Vagina (tissue), 2 donors: ENCODE measurements at regions of chr5 and their contacts with region 1.

Region 1: DNA sequence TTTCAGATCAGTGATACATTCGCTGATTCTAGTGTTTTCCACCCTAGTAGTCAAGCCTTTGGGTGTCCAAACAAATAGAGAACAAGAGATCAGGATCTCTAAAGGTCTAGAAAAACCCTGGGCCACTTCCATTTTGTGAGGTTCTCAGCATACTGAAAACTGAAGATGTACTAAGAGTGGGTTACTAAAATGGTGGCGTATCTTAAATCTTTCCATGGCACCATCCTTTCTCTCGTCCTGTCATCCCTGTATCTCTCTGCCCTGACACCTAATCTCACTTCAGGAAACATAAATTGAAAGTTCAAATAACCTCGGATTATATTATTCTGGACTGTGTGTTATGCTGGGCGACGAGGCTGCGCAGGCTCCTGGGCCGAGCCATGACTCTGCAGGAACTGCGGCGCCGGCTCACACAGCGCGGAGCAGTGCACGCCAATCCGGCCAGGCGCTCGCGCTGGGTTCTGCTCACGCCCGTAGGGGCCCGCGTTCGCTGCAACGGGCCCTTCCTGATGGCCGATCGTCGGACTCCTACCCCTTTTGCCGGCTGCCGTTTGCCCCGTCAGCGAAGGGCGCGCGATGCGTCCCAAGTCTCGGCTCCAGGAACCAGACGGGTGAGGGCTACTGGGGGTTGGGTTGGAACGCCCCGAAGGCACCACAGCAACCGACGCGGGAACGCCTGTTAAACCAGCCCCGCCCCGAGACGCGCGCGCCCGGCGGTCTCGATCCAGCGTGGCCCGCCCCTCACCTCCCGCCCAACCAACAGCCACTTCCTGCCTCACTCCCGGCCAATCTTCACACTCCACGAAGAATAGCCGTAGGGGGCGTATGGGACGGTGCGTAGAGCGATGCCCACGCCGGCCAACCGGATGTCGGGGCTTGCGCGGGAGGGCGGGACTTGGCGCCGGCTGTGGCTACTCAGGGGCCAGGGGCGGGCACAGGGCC is 503 bp upstream of the CANX start:
- DNase-seq: peak; percentile 99
- H3K4me3 ChIP-seq: peak overlapping the region; percentile 91 to 95
- H3K27ac ChIP-seq: peak overlapping the region; percentile 96
- H3K4me1 ChIP-seq: peaks cover 45% of the 10 kb centered on the region
- H3K27me3 ChIP-seq: no peaks in the 10 kb centered on the region
- CTCF ChIP-seq: no peak
- POLR2A ChIP-seq: peak in 1 of 2 donors; percentile 74

Region 2: DNA sequence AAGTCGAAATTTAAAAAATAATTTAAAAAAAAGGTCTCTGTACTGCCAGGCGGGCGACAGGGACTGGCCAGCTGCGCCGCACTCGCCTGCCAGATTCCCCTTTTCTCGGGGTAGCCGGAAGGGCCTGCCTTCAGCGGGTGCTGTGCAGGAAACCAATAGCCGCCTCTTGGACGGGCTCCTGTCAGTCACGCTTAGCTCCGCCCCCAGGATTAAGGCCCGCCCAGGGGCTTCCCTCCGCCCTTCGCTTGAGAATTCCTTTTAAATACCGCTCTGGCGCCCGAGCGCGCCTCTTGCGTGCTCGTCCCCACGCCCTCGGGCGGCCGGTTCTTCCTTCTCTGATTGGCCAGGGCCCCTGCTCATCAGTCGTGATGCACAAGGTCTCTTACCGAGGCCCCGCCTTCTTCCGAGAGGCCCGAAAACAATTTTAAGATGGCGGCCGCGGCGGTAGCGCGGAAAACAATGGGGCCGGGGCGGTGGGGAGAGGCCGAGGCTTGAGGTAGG is 34.2 kb after region 1 on chr5 and contains the start of gene MAML1:
- intact Hi-C with region 1: loop called (anchors 2 kb)
- DNase-seq: peak; percentile 100
- H3K4me3 ChIP-seq: peak within 1 kb of the TSS; percentile 80 to 98
- H3K27ac ChIP-seq: peak within 1 kb of the TSS; percentile 95
- H3K4me1 ChIP-seq: peaks cover 48% of the 10 kb centered on the region
- H3K27me3 ChIP-seq: no peaks in the 10 kb centered on the region
- CTCF ChIP-seq: no peak
- POLR2A ChIP-seq: peak; percentile 47 to 77
- total RNA-seq, gene MAML1: 25.3 TPM